ENCODE measurements at regions of chr3 and their contacts with region 1.

Region 1: DNA sequence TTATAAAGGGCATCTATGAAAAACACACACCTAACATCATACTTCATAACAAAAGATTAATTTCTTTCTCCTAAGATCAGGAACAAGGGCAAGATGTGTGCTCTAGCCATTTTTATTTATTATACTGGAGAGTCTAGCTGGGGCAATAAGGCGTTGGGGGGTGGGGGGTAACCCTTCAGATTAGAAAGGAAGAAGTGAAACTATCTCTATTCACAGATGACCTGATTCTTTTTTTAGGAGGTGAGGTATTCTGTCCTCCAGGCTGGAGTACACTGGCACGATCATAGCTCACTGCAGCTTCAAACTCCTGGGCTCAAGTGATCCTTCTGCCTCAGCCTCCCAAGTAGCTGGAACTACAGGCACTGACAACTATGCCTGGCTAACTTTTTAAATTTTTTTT is 89.5 kb upstream of the MANF start:
- DNase-seq: no peak

Region 2: DNA sequence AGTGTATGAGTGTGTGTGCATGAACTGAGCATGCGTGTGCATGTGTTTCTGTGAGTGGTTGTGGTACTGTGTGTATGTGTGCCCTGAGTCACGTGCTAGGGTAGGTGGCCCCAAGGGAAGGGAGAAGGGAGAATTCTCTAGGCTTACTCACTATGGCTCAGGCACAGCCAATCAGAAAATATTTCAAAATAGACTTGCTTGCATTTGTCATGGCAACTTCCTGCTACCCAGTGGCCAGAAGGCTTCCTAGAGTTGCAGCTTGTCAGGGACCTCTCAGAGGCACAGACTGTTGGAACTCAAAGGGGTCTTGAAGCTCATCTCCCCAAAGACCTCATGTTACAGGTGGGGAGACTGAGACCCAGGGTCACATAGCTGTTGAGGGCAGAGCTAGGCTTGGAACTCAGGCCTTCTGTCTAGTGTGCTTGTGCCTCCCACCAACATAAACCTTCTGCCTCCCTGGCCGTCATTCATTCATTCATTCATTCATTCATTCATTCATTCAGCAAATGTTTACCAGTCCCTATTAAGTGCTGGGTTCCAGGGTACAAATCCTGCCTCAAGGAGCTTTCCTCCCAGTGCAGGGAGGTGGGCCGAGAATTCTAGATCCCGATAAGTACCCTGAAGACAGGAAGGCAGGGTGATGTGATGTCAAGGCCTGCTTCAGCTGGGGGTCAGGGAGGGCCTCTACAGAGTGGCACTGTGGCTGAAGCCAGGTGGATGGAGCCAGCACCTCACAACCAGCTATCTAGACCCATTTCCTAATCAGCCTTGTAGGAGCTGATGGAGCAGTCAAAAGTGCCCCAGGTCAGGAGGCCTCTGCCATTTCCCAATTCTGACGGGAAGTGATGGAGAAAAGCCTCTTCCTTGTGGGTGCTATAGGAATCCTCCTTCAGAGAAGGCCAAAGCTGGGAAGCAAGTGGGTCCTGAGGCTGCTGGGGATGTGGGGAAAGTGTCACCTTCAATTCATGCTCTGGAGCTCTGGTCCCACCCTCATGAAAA is 1845.5 kb after region 1 on chr3:
- intact Hi-C with region 1: loop called in 1 of 2 experiments (anchors 10 kb)
- DNase-seq: peak; percentile 56